Gastrocnemius medialis (tissue), 4 donors: ENCODE measurements at regions of chr4 and their contacts with region 1.

Region 1: DNA sequence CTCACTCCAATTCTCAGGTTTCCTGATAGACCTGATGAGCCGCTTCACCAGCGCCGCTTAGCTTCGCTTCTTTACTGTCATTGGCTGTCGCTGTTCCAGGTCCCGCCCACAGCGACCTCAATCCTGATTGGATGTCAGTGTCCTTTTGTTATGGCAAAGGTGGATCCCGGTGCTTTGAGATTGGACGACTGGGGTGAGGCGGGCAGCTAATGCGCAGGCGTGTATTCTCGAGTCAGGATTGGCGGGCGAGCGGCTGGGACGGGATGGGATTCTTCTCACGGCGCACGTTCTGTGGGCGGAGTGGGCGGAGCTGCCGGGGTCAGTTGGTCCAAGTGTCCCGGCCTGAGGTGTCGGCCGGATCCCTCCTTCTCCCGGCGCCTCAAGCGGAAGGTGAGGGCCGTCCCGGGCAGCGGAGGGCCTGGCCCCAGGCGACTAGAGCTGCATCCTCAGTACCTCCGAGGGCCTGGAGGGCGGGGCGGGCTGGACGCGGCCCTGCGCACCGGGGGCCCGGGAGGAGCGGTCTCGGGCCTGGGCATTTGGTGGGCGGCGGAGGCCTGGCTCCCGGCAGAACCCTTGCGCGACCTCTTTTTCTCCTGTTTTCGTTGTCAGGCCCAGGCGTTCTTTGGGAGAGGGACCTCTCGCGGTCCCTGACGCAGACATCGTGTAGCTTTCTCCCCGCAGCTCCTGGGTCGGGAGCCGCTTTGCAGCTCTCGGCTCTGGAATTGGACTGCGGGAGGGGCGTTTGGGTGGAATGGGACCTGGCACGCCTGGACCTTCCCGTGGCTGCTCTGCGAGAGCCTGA is at the start of gene SCOC:
- DNase-seq: peak; percentile 99 to 100
- ATAC-seq: peak; percentile 99 to 100
- H3K4me3 ChIP-seq: peak within 1 kb of the TSS; percentile 70 to 97 (median 80)
- H3K27ac ChIP-seq: peak within 1 kb of the TSS; percentile 86 to 96 (median 92)
- H3K4me1 ChIP-seq: peaks cover 28 to 39% of the 10 kb centered on the region in 2 donors
- H3K27me3 ChIP-seq: no peaks in the 10 kb centered on the region
- CTCF ChIP-seq: no peak
- POLR2A ChIP-seq: peak; percentile 77 to 78
- total RNA-seq, gene SCOC: 21.5 to 36.6 (median 30.6) TPM

Region 2: GRCh38 chr4:139815778-139816601 is 557.5 kb before region 1 on chr4:
- in situ Hi-C with region 1: loop called in 1 of 4 experiments (anchors 10 kb)
- intact Hi-C with region 1: no loop called
- DNase-seq: peak; percentile 65 to 71
- ATAC-seq: peak; percentile 91 to 94
- H3K4me3 ChIP-seq: peak overlapping the region; percentile 47 to 69 (median 56)
- H3K27ac ChIP-seq: peak overlapping the region; percentile 73 to 83 (median 80)
- H3K4me1 ChIP-seq: peaks cover 22 to 44% of the 10 kb centered on the region in 2 donors
- H3K27me3 ChIP-seq: no peaks in the 10 kb centered on the region
- CTCF ChIP-seq: no peak
- POLR2A ChIP-seq: peak; percentile 49 to 55

Region 3: GRCh38 chr4:140308366-140309123 is 65.0 kb before region 1 on chr4:
- in situ Hi-C with region 1: no loop called
- intact Hi-C with region 1: loop called (anchors 5 kb)
- DNase-seq: peak; percentile 80 to 89
- ATAC-seq: peak; percentile 97 to 98
- H3K4me3 ChIP-seq: peak overlapping the region in 3 of 4 donors; percentile 15 to 38 (median 29)
- H3K27ac ChIP-seq: peak overlapping the region; percentile 82 to 88 (median 87)
- H3K4me1 ChIP-seq: peaks cover 22 to 25% of the 10 kb centered on the region in 2 donors
- H3K27me3 ChIP-seq: no peaks in the 10 kb centered on the region
- CTCF ChIP-seq: no peak
- POLR2A ChIP-seq: no peak

Region 4: GRCh38 chr4:140395668-140396067 is 22.1 kb after region 1 on chr4:
- in situ Hi-C with region 1: no loop called
- intact Hi-C with region 1: no loop called
- DNase-seq: no peak
- ATAC-seq: no peak
- H3K4me3 ChIP-seq: no peak overlapping the region
- H3K27ac ChIP-seq: no peak overlapping the region
- H3K4me1 ChIP-seq: no peaks in the 10 kb centered on the region
- H3K27me3 ChIP-seq: no peaks in the 10 kb centered on the region
- CTCF ChIP-seq: no peak
- POLR2A ChIP-seq: no peak

Region 5: GRCh38 chr4:140523857-140524742 is 150.6 kb after region 1 on chr4 and contains the start of gene ELMOD2:
- in situ Hi-C with region 1: loop called in 2 of 4 experiments (anchors 10 kb)
- intact Hi-C with region 1: loop called (anchors 2 kb)
- DNase-seq: peak; percentile 97 to 98
- ATAC-seq: peak; percentile 99
- H3K4me3 ChIP-seq: peak within 1 kb of the TSS; percentile 67 to 87 (median 86)
- H3K27ac ChIP-seq: peak within 1 kb of the TSS; percentile 76 to 90 (median 81)
- H3K4me1 ChIP-seq: peaks cover 2 to 18% of the 10 kb centered on the region in 2 donors
- H3K27me3 ChIP-seq: no peaks in the 10 kb centered on the region
- CTCF ChIP-seq: peak; percentile 71 to 94 (median 81)
- POLR2A ChIP-seq: peak in 1 of 2 donors; percentile 34
- total RNA-seq, gene ELMOD2: 3.2 to 13.7 (median 10.9) TPM

Region 6: DNA sequence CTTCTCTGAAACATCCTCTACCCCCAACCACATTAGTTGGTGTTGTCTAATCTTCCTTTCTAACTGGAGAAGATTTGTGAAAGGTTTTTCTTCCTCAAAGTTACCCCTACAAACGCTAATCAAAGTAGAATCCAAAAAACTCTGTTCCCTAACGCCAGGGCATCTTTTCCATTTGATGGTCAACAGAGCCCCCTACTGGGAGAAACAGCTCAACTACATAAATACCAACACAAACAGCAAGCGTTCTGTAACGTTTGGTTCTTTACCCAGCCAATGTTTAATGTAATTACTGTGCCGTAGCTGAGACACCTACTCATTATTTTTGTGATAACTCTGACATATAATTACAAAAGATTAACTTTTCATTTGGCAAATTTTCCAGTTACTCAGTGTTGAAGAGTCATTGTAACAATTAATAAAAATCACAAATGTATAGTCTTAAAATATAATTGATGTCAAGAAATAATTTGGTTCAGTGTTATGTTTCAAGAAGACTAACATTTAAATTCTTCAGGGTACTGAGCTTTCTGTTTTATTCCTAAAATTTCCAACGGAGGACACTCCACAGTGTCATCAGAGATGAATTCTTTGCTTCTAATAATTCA is 477.6 kb after region 1 on chr4:
- in situ Hi-C with region 1: loop called in 3 of 4 experiments (anchors 10 to 25 kb)
- intact Hi-C with region 1: no loop called
- DNase-seq: no peak
- ATAC-seq: peak in 1 of 2 donors; percentile 41
- H3K4me3 ChIP-seq: no peak overlapping the region
- H3K27ac ChIP-seq: no peak overlapping the region
- H3K4me1 ChIP-seq: peaks cover 0 to 1% of the 10 kb centered on the region in 2 donors
- H3K27me3 ChIP-seq: no peaks in the 10 kb centered on the region
- CTCF ChIP-seq: peak; percentile 44 to 69 (median 64)
- POLR2A ChIP-seq: no peak